ENCODE measurements at regions of chr10 and their contacts with region 1.

Region 1: GRCh38 chr10:96129387-96130325 is at the start of gene ZNF518A:
- DNase-seq: peak; percentile 97
- H3K4me3 ChIP-seq: peak within 1 kb of the TSS; percentile 80
- H3K27ac ChIP-seq: peak within 1 kb of the TSS; percentile 98
- H3K27me3 ChIP-seq: no peaks in the 10 kb centered on the region
- CTCF ChIP-seq: no peak
- polyA plus RNA-seq, gene ZNF518A: 5.7 and 9.1 TPM in 2 replicates

Region 2: DNA sequence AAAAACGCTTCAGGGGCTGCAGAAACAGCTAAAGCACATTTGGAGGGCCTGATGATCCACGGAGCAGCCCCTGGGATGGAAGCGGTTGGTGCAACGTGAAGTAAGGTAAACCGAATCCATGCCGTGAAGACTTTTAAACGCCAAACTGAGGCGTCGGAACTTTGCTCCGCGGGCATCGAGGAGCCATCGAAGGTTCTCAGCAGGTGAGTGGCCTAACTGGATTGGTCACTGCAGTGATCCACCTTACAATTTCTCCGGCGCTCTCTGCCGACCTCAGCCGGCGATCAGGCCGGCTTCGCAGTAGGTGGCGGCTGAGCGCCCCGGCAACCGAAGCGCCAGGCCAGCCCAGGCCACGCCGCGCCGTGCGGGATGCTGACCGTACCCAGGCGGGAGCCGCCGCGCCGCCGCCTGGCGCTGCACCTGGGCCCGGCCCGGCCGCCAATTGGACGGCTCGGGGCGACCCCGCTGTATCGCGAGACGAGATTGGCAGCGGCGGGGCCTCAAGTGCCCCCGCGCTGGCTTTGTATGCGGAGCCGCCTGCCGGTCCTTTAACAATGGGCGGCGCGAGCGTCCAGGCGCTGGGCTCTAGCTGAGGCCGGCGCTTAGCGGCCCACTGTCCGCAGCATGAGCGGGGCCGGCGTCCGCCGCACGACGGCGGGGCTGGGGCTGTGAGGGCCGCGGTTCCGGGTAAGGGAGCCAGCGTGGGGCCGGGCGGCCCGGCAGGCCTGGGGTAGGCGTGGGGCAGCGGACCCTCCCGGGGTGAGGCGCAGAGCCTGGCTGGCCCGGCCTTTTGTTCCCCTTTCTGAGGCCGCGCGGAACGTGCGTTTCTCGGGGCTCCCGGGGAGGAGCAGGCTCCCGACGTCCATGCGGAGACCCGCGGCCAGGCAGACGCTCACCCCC is 86.4 kb before region 1 on chr10 and contains the start of gene CCNJ:
- CTCF ChIA-PET with region 1: no interaction called
- POLR2A ChIA-PET with region 1: interaction called, 14 read pairs
- DNase-seq: peak; percentile 68
- H3K4me3 ChIP-seq: peak within 1 kb of the TSS; percentile 84
- H3K27ac ChIP-seq: peak within 1 kb of the TSS; percentile 87
- H3K27me3 ChIP-seq: no peaks in the 10 kb centered on the region
- CTCF ChIP-seq: no peak
- polyA plus RNA-seq, gene CCNJ: 8.4 and 9.2 TPM in 2 replicates

Region 3: DNA sequence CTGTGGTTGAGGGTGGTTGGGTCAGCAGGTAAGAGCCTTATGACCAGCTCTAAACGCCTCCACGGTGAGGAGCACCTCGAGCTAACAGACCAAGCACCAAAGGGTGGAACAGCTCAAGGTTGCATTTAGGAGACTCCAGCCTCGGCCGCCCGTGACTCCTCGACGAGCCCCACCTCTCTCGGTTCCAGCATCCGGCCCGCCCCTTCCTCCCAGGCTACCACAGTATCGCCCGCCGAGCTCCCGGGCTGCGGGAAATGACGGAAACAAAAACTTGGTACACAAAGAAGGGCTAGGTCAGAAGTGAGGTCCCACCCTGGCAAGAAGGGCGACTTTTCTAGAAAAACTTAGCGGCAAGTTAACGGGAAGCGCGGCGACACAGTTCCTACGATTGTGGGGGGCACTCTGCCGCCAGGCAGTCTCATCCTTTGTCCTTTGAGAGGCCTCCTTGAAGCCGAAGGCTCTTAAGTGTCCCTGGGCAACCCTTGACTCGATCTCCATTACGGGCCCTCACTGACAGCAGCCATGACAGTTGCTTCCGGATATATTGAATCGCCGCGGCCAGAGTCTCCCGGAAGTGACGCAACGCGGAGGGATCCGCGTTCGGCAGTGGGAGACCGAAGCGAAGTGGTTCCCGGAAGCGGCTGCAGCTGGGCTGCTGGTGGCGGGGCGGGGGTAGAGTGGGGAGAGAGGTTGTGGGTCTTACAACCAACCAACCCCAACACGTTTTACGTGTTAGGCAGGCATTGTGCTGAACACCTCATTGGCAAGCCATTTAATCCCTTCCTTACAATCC is 39.8 kb before region 1 on chr10:
- CTCF ChIA-PET with region 1: interaction called, 7 read pairs
- POLR2A ChIA-PET with region 1: interaction called, 56 read pairs
- DNase-seq: peak; percentile 92
- H3K4me3 ChIP-seq: peak overlapping the region; percentile 83
- H3K27ac ChIP-seq: peak overlapping the region; percentile 91
- H3K27me3 ChIP-seq: peaks cover 8% of the 10 kb centered on the region
- CTCF ChIP-seq: no peak